ENCODE measurements at regions of chr10 and their contacts with region 1.

Region 1: DNA sequence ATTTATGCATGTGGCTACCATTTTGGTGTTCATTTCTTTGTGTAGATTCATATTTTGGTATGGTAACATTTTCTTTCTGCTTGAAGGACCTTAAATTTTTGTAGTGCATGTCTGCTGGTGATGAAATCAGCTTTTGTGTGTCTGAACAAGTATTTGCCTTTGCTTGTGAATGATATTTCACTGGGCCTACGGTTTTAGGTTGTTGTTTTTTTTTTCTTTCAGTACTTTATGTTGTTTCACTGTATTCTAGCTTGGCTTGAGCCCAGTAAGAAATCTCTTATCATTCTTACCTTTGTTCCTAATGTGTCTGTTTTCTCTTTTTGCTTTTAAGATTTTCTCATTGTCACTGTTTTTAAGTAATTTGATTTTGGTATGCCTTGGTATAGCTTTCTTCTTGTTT is 31.9 kb downstream of the SAMD8 start:
- DNase-seq: no peak
- ATAC-seq: no peak
- H3K4me3 ChIP-seq: no peak overlapping the region
- H3K4me3 Mint-ChIP-seq: peak overlapping the region in 1 of 10 donors; percentile 38
- H3K27ac ChIP-seq: no peak overlapping the region
- H3K27ac Mint-ChIP-seq: peak overlapping the region in 6 of 9 donors; percentile 47 to 80 (median 65)
- H3K4me1 ChIP-seq: peaks cover 0 to 12% of the 10 kb centered on the region in 2 donors
- H3K4me1 Mint-ChIP-seq: peaks cover 28 to 77% (median 43%) of the 10 kb centered on the region in 7 donors
- H3K27me3 ChIP-seq: no peaks in the 10 kb centered on the region
- H3K27me3 Mint-ChIP-seq: no peaks in the 10 kb centered on the region

Region 2: GRCh38 chr10:75165684-75166622 is 22.6 kb after region 1 on chr10:
- CTCF ChIA-PET with region 1: no interaction called
- POLR2A ChIA-PET with region 1: no interaction called
- intact Hi-C with region 1: loop called in 1 of 2 experiments (anchors 2 kb)
- DNase-seq: peak in 5 of 9 donors; percentile 7 to 35 (median 12)
- ATAC-seq: peak; percentile 75
- H3K4me3 ChIP-seq: peak overlapping the region; percentile 11
- H3K4me3 Mint-ChIP-seq: peak overlapping the region; percentile 64 to 86 (median 73)
- H3K27ac ChIP-seq: peak overlapping the region; percentile 66
- H3K27ac Mint-ChIP-seq: peak overlapping the region; percentile 78 to 91 (median 86)
- H3K4me1 ChIP-seq: peaks cover 22 to 31% of the 10 kb centered on the region in 2 donors
- H3K4me1 Mint-ChIP-seq: peaks cover 38 to 68% (median 50%) of the 10 kb centered on the region in 7 donors
- H3K27me3 ChIP-seq: no peaks in the 10 kb centered on the region
- H3K27me3 Mint-ChIP-seq: no peaks in the 10 kb centered on the region

Measured in naive thymus-derived CD4-positive, alpha-beta T cell (primary cell).